ENCODE measurements at regions of chr5 and their contacts with region 1.

Region 1: DNA sequence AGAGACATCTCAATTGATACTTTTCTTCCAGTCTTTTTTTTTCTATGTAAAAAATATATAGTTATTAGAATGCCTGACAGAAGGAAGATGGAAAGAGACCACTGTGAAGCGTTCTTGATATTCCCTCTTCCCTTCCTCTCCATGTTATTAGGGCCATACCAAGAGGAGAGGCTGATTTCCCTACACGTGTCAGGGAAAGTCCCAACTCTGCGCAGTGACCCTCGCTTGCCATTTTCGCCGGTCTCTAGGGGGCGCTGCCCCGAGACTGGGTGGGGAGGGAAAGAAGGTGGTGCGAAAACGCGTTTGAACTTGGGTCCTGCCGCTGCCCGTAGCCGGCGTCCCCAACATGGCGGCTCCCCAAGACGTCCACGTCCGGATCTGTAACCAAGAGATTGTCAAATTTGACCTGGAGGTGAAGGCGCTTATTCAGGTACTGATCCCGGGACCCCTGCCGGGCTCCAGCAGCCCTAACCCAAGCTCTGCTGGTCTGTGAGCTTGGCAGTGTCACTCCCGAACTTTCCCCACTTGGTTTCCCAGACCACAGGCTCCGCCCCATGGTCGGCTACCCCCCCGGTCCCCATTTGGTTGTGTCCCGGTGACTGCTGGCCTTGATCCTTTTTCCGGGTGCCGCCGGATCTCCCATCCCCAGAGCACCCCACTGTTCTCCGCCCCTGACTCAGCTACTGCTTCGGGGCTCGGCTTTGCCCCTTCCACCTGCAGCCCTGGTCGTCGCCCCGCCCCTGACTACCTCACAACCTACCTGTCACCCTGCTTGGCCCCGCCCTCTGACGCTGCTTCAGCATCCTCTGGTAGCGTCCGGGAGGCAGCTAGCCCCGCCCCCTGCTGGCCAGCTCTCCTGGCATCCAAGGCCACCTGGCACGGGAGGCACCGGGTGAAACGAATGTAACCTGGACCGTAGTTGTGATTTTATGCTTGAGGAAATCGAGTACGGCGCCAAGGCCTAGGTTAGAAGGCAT is at the start of gene BNIP1:
- DNase-seq: peak; percentile 98
- ATAC-seq: peak; percentile 94
- H3K4me3 Mint-ChIP-seq: peak within 1 kb of the TSS; percentile 99
- H3K27ac Mint-ChIP-seq: peak within 1 kb of the TSS; percentile 99
- H3K4me1 Mint-ChIP-seq: peaks cover 10% of the 10 kb centered on the region
- H3K27me3 Mint-ChIP-seq: no peaks in the 10 kb centered on the region
- total RNA-seq, gene BNIP1: 24.2 to 26.8 TPM

Region 2: DNA sequence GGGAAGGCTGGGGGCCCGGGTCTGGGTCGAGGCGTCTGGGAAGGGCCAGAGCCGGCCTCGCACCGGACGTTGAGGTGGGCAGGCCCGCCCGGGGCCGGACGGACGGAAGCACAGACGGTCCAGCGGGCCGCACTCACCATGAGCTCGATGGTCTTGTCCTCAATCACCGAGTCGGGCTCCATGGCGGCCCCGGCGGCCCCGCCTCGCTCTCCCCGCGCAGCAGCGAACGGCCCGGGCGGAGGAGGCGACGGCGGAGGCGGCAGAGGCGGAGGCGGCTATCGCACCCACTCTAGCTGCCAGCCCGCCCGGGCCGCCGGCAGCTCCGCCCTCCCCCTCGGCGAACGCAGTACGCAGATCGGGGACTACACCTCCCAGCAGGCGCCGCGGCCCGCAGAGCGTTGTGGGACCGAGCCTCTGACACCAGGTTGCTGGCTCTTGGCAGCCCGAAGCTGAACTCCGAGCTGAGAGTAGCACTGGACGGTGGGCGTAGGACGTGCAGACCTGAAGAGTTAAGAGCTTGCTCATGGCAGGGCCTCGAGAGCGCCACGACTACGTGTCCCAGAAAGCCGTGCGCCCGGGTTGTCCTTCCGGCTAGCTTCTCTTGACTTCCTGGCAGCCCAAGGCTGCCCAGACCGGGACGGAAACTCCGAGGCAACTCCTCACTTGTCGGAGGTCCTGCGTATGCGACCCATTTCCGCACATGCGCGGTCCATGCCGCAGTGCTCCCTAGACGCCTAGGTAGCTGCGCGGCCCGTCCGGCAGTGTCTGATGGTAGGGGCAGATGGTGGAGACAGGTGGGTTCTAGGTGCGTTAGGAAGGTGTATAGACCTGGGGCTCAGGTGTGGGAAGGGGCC is 1137.9 kb before region 1 on chr5 and contains the start of gene FBXW11:
- CTCF ChIA-PET with region 1: no interaction called
- POLR2A ChIA-PET with region 1: no interaction called
- intact Hi-C with region 1: loop called in 1 of 2 experiments (anchors 10 kb)
- DNase-seq: peak; percentile 97
- ATAC-seq: peak; percentile 85
- H3K4me3 Mint-ChIP-seq: peak within 1 kb of the TSS; percentile 92
- H3K27ac Mint-ChIP-seq: peak within 1 kb of the TSS; percentile 98
- H3K4me1 Mint-ChIP-seq: peaks cover 43% of the 10 kb centered on the region
- H3K27me3 Mint-ChIP-seq: no peaks in the 10 kb centered on the region
- total RNA-seq, gene FBXW11: 33.8 to 39.5 TPM

Region 3: GRCh38 chr5:172984243-172984953 is 160.1 kb before region 1 on chr5:
- CTCF ChIA-PET with region 1: interaction called, 16 read pairs
- POLR2A ChIA-PET with region 1: interaction called, 12 read pairs
- intact Hi-C with region 1: loop called (anchors 1 kb)
- DNase-seq: peak; percentile 90
- ATAC-seq: peak; percentile 79
- H3K4me3 Mint-ChIP-seq: peak overlapping the region; percentile 96
- H3K27ac Mint-ChIP-seq: peak overlapping the region; percentile 99
- H3K4me1 Mint-ChIP-seq: peaks cover 37% of the 10 kb centered on the region
- H3K27me3 Mint-ChIP-seq: no peaks in the 10 kb centered on the region

Region 4: GRCh38 chr5:173035904-173036707 is 108.4 kb before region 1 on chr5:
- CTCF ChIA-PET with region 1: interaction called, 4 read pairs
- POLR2A ChIA-PET with region 1: no interaction called
- intact Hi-C with region 1: loop called in 1 of 2 experiments (anchors 1 kb)
- DNase-seq: peak; percentile 74
- ATAC-seq: peak; percentile 39
- H3K4me3 Mint-ChIP-seq: peak overlapping the region; percentile 59
- H3K27ac Mint-ChIP-seq: peak overlapping the region; percentile 96
- H3K4me1 Mint-ChIP-seq: peaks cover 62% of the 10 kb centered on the region
- H3K27me3 Mint-ChIP-seq: no peaks in the 10 kb centered on the region

Region 5: DNA sequence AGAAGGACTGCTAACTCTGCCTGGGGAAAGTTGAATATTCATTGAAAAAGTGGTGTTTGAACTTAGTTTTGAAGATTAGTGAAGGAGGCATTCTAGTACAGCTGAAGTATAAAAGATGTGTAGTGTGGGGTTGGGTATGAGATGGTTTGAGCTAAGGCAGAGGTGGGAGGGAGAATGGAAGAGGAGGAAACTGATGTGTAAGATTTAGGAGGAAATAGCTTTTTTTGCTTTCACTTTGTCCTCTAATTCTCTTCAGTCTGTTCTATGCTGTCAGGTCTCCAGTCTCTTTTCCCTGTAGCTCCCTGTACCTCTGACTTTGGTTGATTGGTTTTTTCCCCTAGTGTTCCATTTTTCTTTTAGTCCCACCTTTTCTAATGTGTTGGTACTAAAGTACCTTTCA is 79.3 kb before region 1 on chr5:
- CTCF ChIA-PET with region 1: interaction called, 4 read pairs
- POLR2A ChIA-PET with region 1: no interaction called
- intact Hi-C with region 1: loop called in 1 of 2 experiments (anchors 2 kb)
- DNase-seq: no peak
- ATAC-seq: peak; percentile 88
- H3K4me3 Mint-ChIP-seq: peak overlapping the region; percentile 68
- H3K27ac Mint-ChIP-seq: peak overlapping the region; percentile 93
- H3K4me1 Mint-ChIP-seq: peaks cover 79% of the 10 kb centered on the region
- H3K27me3 Mint-ChIP-seq: no peaks in the 10 kb centered on the region

Region 6: DNA sequence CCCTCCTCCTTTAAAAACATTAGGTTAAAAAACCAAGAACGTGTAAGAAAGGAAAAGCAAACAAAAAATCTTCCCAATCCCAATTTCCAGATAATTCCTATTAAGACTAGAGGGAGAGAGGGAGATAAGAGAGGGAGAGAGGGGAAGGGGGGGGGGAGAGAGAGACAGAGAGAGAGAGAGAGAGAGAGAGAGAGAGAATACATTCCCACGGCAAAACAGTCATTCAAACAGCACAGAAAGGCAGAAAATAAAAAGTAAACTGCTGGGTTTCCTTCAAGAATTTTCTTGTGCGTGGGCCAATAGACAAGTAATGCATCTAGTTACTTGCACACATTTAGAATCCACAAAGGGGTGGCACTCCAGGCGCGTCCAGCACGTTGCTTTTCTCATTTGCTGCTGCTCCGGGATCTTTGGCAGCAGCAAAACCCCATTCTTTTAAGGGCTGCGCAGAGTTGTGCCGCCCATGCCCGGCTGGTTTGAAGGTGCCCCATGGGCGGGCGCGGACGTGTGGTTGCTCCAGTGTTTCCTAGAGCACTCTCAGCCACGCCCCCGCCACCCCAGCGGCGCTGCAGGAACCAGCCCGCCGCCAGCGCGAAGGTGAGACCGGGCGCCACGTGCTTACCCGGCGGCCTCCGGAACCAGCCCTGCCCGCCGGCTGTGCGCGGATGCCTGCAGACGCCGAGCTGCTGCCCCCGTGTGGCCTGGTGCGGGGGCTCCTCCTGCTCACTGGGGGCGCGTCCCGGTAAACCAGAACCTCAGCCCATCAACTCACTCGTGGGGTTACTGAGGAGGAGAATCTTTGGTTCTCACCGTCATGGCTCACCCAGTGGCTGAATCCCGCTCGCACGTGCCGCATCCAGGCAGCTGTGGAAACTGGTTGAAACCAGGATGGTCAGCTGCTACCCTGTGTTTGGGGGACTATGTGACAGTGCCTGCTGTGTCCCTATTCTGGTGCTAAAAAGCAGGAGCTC is 139.1 kb after region 1 on chr5:
- CTCF ChIA-PET with region 1: no interaction called
- POLR2A ChIA-PET with region 1: no interaction called
- intact Hi-C with region 1: loop called in 1 of 2 experiments (anchors 1 kb)
- DNase-seq: peak; percentile 90
- ATAC-seq: peak; percentile 96
- H3K4me3 Mint-ChIP-seq: peak overlapping the region; percentile 25
- H3K27ac Mint-ChIP-seq: no peak overlapping the region
- H3K4me1 Mint-ChIP-seq: peaks cover 9% of the 10 kb centered on the region
- H3K27me3 Mint-ChIP-seq: peaks cover 44% of the 10 kb centered on the region

Region 7: GRCh38 chr5:173887610-173888472 is 743.4 kb after region 1 on chr5 and contains the start of gene CPEB4:
- CTCF ChIA-PET with region 1: no interaction called
- POLR2A ChIA-PET with region 1: no interaction called
- intact Hi-C with region 1: loop called in 1 of 2 experiments (anchors 10 kb)
- DNase-seq: peak; percentile 98
- ATAC-seq: peak; percentile 96
- H3K4me3 Mint-ChIP-seq: peak within 1 kb of the TSS; percentile 96
- H3K27ac Mint-ChIP-seq: peak within 1 kb of the TSS; percentile 98
- H3K4me1 Mint-ChIP-seq: peaks cover 67% of the 10 kb centered on the region
- H3K27me3 Mint-ChIP-seq: no peaks in the 10 kb centered on the region
- total RNA-seq, gene CPEB4: 5.6 to 8.3 TPM